Gastrocnemius medialis (tissue), 4 donors: ENCODE measurements at regions of chr6 and their contacts with region 1.

Region 1: DNA sequence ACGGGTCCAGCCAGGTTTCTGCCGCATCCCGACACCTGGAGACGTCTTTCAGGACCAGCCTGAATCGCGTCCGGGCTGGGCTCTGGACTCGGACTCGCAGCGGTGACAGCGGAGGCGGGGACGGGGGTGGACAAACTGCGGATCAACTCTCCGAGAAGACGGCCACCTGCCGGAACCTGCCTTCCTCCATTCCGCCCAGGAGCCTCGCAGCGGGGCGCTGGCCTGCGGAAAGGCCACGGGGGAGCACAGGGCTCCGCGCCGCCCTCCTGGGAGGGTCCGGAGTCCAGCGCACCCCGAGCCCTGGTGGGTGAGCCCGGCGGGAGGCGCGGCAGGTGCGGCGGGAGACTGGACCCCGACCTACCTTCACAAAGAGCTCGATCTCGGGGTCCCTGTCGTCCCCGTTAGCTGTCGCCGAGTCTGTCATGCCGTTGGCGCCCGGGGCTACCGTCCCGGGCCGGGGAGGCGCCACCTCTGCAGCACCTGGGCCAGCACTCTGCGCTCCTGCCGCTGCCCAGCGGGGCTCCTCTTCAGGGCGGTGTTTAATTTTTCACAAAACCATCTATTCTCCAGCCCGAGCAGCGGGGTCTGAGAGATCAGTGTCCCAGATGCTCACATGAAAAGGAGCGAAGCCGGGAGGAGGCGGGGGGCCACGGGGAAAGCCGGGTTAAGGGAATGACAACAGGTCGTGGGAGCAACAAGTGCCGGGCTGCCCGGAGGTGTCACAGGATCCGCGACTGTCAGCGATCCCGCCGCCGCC is at the start of gene CLIC5:
- DNase-seq: peak; percentile 72 to 83
- ATAC-seq: peak; percentile 68 to 69
- H3K4me3 ChIP-seq: peak within 1 kb of the TSS; percentile 68 to 84 (median 81)
- H3K27ac ChIP-seq: peak within 1 kb of the TSS; percentile 89 to 99 (median 98)
- H3K4me1 ChIP-seq: peaks cover 40 to 43% of the 10 kb centered on the region in 2 donors
- H3K27me3 ChIP-seq: no peaks in the 10 kb centered on the region
- CTCF ChIP-seq: peak in 2 of 5 experiments; percentile 7 to 10
- POLR2A ChIP-seq: peak; percentile 97 to 98
- total RNA-seq, gene CLIC5: 78.6 to 97.0 (median 91.7) TPM

Region 2: GRCh38 chr6:46042355-46042999 is 27.2 kb after region 1 on chr6:
- in situ Hi-C with region 1: no loop called
- intact Hi-C with region 1: loop called (anchors 2 kb)
- DNase-seq: peak in 1 of 2 donors; percentile 32
- ATAC-seq: peak; percentile 61 to 65
- H3K4me3 ChIP-seq: no peak overlapping the region
- H3K27ac ChIP-seq: peak overlapping the region in 3 of 4 donors; percentile 4 to 22 (median 4)
- H3K4me1 ChIP-seq: peaks cover 40 to 46% of the 10 kb centered on the region in 2 donors
- H3K27me3 ChIP-seq: no peaks in the 10 kb centered on the region
- CTCF ChIP-seq: peak; percentile 50 to 74 (median 68)
- POLR2A ChIP-seq: no peak